ENCODE measurements at regions of chr3 and their contacts with region 1.

Region 1: GRCh38 chr3:57974796-57975388 is 33.3 kb upstream of the FLNB start:
- H3K4me3 ChIP-seq: no peak overlapping the region
- H3K27ac ChIP-seq: no peak overlapping the region
- H3K4me1 ChIP-seq: no peaks in the 10 kb centered on the region
- CTCF ChIP-seq: no peak

Region 2: GRCh38 chr3:57659806-57660439 is 315.0 kb before region 1 on chr3:
- CTCF ChIA-PET with region 1: no interaction called
- POLR2A ChIA-PET with region 1: no interaction called
- H3K4me3 ChIP-seq: no peak overlapping the region
- H3K27ac ChIP-seq: no peak overlapping the region
- H3K4me1 ChIP-seq: no peaks in the 10 kb centered on the region
- CTCF ChIP-seq: no peak

Region 3: DNA sequence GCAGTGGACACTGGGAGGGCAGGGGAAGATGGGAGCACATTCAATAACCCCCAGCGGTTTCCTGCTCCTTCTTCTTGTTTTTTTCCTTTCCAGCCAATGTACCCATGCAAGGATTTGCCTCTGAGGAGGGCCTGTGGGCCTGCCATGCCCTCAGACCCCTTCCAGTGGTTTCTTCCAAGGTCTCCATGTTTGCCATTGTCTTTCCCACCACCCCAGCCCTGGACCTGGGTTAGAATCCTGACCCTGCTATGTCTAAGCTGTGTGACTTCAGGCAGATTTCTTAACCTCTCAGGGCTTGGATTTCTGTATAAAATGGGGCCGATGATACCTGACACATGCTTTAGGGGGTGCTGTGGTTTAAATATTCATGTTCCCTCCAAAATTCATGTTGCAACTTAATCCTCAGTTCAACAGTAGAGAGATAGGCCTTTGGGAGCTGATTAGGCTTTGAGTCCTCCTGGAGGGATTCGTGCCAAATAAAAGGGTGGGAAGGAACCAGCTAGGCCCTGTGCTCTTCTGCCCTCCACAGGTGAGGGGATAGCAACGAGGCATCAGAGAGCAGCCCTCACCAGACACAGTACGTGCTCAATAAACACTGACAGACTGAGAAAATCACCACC is 13.0 kb before region 1 on chr3:
- CTCF ChIA-PET with region 1: interaction called, 11 read pairs
- POLR2A ChIA-PET with region 1: no interaction called
- H3K4me3 ChIP-seq: no peak overlapping the region
- H3K27ac ChIP-seq: no peak overlapping the region
- H3K4me1 ChIP-seq: no peaks in the 10 kb centered on the region
- CTCF ChIP-seq: no peak

Measured in HEK293 (cell line).